HepG2 (cell line): ENCODE measurements at regions of chrX and their contacts with region 1.

Region 1: GRCh38 chrX:133985164-133985966 is at the start of gene GPC3:
- DNase-seq: peak; percentile 73
- ATAC-seq: peak; percentile 88
- H3K4me3 ChIP-seq: peak within 1 kb of the TSS; percentile 80 to 88 (median 86)
- H3K27ac ChIP-seq: peak within 1 kb of the TSS; percentile 94
- H3K4me1 ChIP-seq: peaks cover 29% of the 10 kb centered on the region
- H3K27me3 ChIP-seq: no peaks in the 10 kb centered on the region; a peak in 1 of 5 replicates
- CTCF ChIP-seq: no peak
- EP300 ChIP-seq: no peak
- POLR2A ChIP-seq: peak in 1 of 2 experiments; percentile 74; a peak in 2 of 4 replicates
- RAD21 ChIP-seq: no peak
- total RNA-seq, gene GPC3: 805 and 1,799 TPM in 2 replicates

Region 2: DNA sequence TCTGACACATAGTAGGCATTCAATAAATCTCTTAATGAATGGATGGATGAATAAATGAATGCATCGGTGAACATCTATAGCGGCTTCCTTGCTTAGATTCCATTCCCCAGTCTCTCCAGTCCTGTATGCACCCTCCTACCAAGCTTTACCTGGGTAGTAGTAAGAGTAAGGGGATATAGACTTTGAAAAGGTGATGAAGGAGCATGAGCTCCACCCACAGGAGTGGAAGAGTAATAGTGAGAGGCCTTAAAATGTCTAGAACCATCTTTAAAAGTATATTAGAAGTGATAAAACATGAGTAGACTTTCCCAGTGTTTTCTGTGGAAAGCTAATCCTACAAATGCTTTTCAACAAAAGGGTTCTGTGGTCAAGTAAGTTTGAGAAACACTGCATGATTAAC is 35.5 kb after region 1 on chrX:
- CTCF ChIA-PET with region 1: interaction called, 3 read pairs
- POLR2A ChIA-PET with region 1: interaction called, 216 read pairs
- in situ Hi-C with region 1: loop called (anchors 5 kb)
- intact Hi-C with region 1: loop called (anchors 2 kb)
- DNase-seq: peak; percentile 78
- ATAC-seq: peak; percentile 18; the same call in 1 of the 3 replicates
- H3K4me3 ChIP-seq: no peak overlapping the region; a peak in 1 of 6 replicates
- H3K27ac ChIP-seq: peak overlapping the region; percentile 46
- H3K4me1 ChIP-seq: peaks cover 100% of the 10 kb centered on the region
- H3K27me3 ChIP-seq: no peaks in the 10 kb centered on the region
- CTCF ChIP-seq: peak; percentile 68
- EP300 ChIP-seq: no peak
- POLR2A ChIP-seq: no peak
- RAD21 ChIP-seq: peak; percentile 59

Region 3: GRCh38 chrX:134026565-134027311 is 41.4 kb after region 1 on chrX:
- CTCF ChIA-PET with region 1: no interaction called
- POLR2A ChIA-PET with region 1: interaction called, 216 read pairs
- in situ Hi-C with region 1: loop called (anchors 5 kb)
- intact Hi-C with region 1: loop called (anchors 2 kb)
- DNase-seq: peak; percentile 84
- ATAC-seq: peak; percentile 68
- H3K4me3 ChIP-seq: peak overlapping the region; percentile 37 to 65 (median 57); a peak in 5 of 6 replicates
- H3K27ac ChIP-seq: peak overlapping the region; percentile 76
- H3K4me1 ChIP-seq: peaks cover 46% of the 10 kb centered on the region
- H3K27me3 ChIP-seq: no peaks in the 10 kb centered on the region
- CTCF ChIP-seq: peak; percentile 80
- EP300 ChIP-seq: no peak
- POLR2A ChIP-seq: peak in 1 of 2 experiments; percentile 43; a peak in 1 of 4 replicates
- RAD21 ChIP-seq: peak; percentile 49; the same call in 1 of the 2 replicates

Region 4: DNA sequence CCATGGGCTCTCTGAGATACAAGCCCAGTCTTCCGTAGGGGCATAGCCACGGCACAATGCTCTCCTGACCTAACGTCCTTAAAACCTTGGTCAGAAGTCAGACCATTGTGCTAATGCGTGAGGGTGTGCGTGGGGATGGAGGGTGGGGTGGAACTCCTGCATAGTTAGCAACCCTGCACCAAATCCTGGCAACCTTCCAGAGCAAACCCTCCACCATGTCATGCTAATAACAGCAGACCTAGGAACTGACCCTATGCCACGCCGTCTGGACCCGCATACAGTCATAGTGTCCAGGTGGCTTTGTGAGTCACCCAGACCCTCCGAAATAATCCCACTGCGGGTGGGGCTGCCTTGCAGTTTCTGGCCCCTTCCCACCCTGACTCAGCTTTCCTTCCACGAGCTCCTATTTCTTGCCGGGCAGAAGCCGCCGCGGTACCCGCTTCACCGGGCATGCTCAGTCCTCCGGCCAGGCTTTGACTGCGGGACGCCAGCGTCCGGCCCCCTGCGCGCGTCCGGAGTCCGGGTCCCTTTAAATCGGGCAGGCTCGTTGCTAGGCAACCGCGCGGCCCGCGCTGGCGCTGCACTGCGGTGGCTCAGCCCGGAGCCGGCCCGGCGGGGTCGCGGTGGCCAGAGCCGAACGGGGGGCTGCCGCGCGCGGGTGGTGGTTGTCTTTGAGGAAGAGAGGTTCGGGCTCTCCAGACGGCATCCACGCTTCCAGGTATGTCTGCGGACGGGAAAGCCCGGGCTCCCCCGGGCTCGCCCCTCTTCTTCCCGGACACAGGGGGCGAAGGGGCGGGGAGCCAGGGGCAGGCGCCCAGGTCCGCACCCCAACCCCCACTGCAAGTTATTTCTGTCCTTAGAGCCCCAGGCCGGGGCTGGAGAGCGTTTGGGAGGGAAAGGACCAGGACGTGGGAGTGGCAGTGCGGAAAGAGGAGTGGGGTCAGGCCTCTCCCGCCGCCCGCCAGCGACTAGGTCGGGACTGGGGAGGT is 251.6 kb after region 1 on chrX and contains the start of gene CCDC160:
- CTCF ChIA-PET with region 1: no interaction called
- POLR2A ChIA-PET with region 1: no interaction called
- in situ Hi-C with region 1: no loop called
- intact Hi-C with region 1: no loop called
- DNase-seq: peak; percentile 3
- ATAC-seq: peak; percentile 95
- H3K4me3 ChIP-seq: peak within 1 kb of the TSS; percentile 12 to 46 (median 23); a peak in 3 of 6 replicates
- H3K27ac ChIP-seq: no peak within 1 kb of the TSS
- H3K4me1 ChIP-seq: no peaks in the 10 kb centered on the region
- H3K27me3 ChIP-seq: peaks cover 0 to 8% of the 10 kb centered on the region in 2 experiments; a peak in 1 of 5 replicates
- CTCF ChIP-seq: no peak
- EP300 ChIP-seq: no peak
- POLR2A ChIP-seq: no peak
- RAD21 ChIP-seq: no peak
- total RNA-seq, gene CCDC160: not detected in 2 replicates

Region 5: GRCh38 chrX:134661295-134661694 is 675.9 kb after region 1 on chrX:
- CTCF ChIA-PET with region 1: no interaction called
- POLR2A ChIA-PET with region 1: no interaction called
- in situ Hi-C with region 1: no loop called
- intact Hi-C with region 1: no loop called
- DNase-seq: no peak
- ATAC-seq: no peak
- H3K4me3 ChIP-seq: no peak overlapping the region
- H3K27ac ChIP-seq: no peak overlapping the region
- H3K4me1 ChIP-seq: no peaks in the 10 kb centered on the region
- H3K27me3 ChIP-seq: no peaks in the 10 kb centered on the region
- CTCF ChIP-seq: no peak
- EP300 ChIP-seq: no peak
- POLR2A ChIP-seq: no peak
- RAD21 ChIP-seq: no peak